H1 (cell line): ENCODE measurements at regions of chr5 and their contacts with region 1.

Region 1: DNA sequence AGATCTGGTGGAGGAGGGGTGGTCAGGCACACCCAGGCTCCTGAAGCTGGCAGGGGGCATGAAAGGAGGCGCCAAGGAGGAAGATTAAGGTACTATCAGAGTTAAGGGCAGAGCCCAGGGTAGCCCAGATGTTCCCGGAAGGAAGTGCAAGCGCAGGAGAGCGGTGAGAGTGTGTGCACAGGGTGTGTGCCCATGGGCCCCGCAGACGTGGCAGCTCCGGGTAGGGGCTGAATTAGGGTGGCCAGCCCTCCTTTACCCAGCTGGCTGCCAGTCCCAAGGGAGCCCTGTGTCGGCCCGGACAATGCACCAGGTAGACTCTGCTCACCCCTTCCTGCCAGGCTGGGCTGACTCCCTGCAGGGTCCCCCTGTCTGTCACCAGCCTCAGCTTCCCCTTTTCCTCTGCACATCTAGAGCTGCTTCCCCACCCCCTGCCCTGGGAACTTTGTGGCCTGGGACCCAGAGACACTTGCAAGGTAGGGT is at the start of gene SMIM33:
- DNase-seq: no peak
- H3K4me3 ChIP-seq: no peak within 1 kb of the TSS
- H3K27ac ChIP-seq: no peak within 1 kb of the TSS
- H3K4me1 ChIP-seq: peaks cover 6 to 33% (median 14%) of the 10 kb centered on the region in 4 experiments
- H3K27me3 ChIP-seq: 0 out of 7 replicates have a peak, but pooled peaks cover 0 to 2% (median 0%) of the 10 kb centered on the region in 4 experiments
- CTCF ChIP-seq: no peak
- EP300 ChIP-seq: no peak
- POLR2A ChIP-seq: no peak
- RAD21 ChIP-seq: no peak
- total RNA-seq, gene SMIM33: not detected in 2 replicates

Region 2: GRCh38 chr5:139439013-139439903 is 31.6 kb before region 1 on chr5 and contains the start of gene DNAJC18:
- CTCF ChIA-PET with region 1: interaction called, 4 read pairs
- POLR2A ChIA-PET with region 1: interaction called, 10 read pairs
- DNase-seq: peak; percentile 76 to 97
- H3K4me3 ChIP-seq: peak within 1 kb of the TSS; percentile 77 to 89 (median 84)
- H3K27ac ChIP-seq: peak within 1 kb of the TSS; percentile 93; the same call in 1 of the 2 replicates
- H3K4me1 ChIP-seq: peaks cover 0 to 8% (median 2%) of the 10 kb centered on the region in 4 experiments; a peak in 4 of 7 replicates
- H3K27me3 ChIP-seq: no peaks in the 10 kb centered on the region
- CTCF ChIP-seq: no peak
- EP300 ChIP-seq: no peak
- POLR2A ChIP-seq: peak; percentile 86 to 87
- RAD21 ChIP-seq: peak in 1 of 2 experiments; percentile 1; a peak in 1 of 4 replicates
- total RNA-seq, gene DNAJC18: 22.0 and 29.2 TPM in 2 replicates

Region 3: GRCh38 chr5:139524932-139525585 is 54.2 kb after region 1 on chr5:
- CTCF ChIA-PET with region 1: no interaction called
- POLR2A ChIA-PET with region 1: no interaction called
- DNase-seq: no peak
- H3K4me3 ChIP-seq: peak overlapping the region in 1 of 4 experiments; percentile 38; a peak in 1 of 8 replicates
- H3K27ac ChIP-seq: no peak overlapping the region
- H3K4me1 ChIP-seq: peaks cover 6 to 32% (median 28%) of the 10 kb centered on the region in 4 experiments; a peak in 6 of 7 replicates
- H3K27me3 ChIP-seq: no peaks in the 10 kb centered on the region
- CTCF ChIP-seq: no peak
- EP300 ChIP-seq: no peak
- POLR2A ChIP-seq: no peak
- RAD21 ChIP-seq: no peak